ENCODE measurements at regions of chr5 and their contacts with region 1.

Region 1: GRCh38 chr5:141691867-141692532 is 10.0 kb upstream of the ARAP3 start:
- DNase-seq: peak; percentile 69
- H3K4me3 ChIP-seq: peak overlapping the region in 2 of 3 experiments; percentile 35 to 47
- H3K27ac ChIP-seq: no peak overlapping the region
- H3K4me1 ChIP-seq: peaks cover 4% of the 10 kb centered on the region
- H3K27me3 ChIP-seq: no peaks in the 10 kb centered on the region
- CTCF ChIP-seq: peak; percentile 87 to 96

Region 2: DNA sequence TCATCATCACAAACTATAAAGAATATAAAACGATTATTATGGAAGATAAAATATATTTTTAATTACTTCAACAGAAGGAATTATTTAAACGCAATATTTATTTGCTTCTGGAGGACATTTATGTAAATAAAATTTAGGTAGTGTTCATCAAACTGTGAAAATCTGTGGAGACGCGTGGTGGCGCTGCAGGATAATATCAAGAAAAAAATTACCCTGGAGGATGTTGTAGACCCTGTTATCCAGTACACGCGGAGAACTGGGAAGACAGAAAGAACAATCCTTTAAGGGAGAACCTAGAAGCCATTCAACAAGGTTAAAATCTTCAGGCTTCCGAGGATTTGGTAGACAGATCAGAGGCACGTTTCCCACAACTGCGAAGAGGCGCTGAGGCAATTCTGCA is 483.5 kb before region 1 on chr5 and contains the start of gene PCDHB12:
- CTCF ChIA-PET with region 1: no interaction called
- dilution Hi-C with region 1: no loop called
- in situ Hi-C with region 1: no loop called
- intact Hi-C with region 1: no loop called
- DNase-seq: no peak
- H3K4me3 ChIP-seq: no peak within 1 kb of the TSS
- H3K27ac ChIP-seq: no peak within 1 kb of the TSS
- H3K4me1 ChIP-seq: no peaks in the 10 kb centered on the region
- H3K27me3 ChIP-seq: no peaks in the 10 kb centered on the region
- CTCF ChIP-seq: peak; percentile 21 to 38
- total RNA-seq, gene PCDHB12: 0.17 TPM in 1 of 2 donors, not detected in the other

Region 3: GRCh38 chr5:141664732-141665461 is 27.1 kb before region 1 on chr5:
- CTCF ChIA-PET with region 1: no interaction called
- dilution Hi-C with region 1: no loop called
- in situ Hi-C with region 1: no loop called
- intact Hi-C with region 1: loop called (anchors 1 kb)
- DNase-seq: no peak
- H3K4me3 ChIP-seq: no peak overlapping the region
- H3K27ac ChIP-seq: no peak overlapping the region
- H3K4me1 ChIP-seq: no peaks in the 10 kb centered on the region
- H3K27me3 ChIP-seq: no peaks in the 10 kb centered on the region
- CTCF ChIP-seq: peak; percentile 84 to 91

Region 4: GRCh38 chr5:141757402-141757801 is 65.4 kb after region 1 on chr5:
- CTCF ChIA-PET with region 1: no interaction called
- dilution Hi-C with region 1: no loop called
- in situ Hi-C with region 1: no loop called
- intact Hi-C with region 1: no loop called
- DNase-seq: peak; percentile 62
- H3K4me3 ChIP-seq: no peak overlapping the region
- H3K27ac ChIP-seq: no peak overlapping the region
- H3K4me1 ChIP-seq: no peaks in the 10 kb centered on the region
- H3K27me3 ChIP-seq: peaks cover 24% of the 10 kb centered on the region
- CTCF ChIP-seq: peak; percentile 42 to 70

Region 5: DNA sequence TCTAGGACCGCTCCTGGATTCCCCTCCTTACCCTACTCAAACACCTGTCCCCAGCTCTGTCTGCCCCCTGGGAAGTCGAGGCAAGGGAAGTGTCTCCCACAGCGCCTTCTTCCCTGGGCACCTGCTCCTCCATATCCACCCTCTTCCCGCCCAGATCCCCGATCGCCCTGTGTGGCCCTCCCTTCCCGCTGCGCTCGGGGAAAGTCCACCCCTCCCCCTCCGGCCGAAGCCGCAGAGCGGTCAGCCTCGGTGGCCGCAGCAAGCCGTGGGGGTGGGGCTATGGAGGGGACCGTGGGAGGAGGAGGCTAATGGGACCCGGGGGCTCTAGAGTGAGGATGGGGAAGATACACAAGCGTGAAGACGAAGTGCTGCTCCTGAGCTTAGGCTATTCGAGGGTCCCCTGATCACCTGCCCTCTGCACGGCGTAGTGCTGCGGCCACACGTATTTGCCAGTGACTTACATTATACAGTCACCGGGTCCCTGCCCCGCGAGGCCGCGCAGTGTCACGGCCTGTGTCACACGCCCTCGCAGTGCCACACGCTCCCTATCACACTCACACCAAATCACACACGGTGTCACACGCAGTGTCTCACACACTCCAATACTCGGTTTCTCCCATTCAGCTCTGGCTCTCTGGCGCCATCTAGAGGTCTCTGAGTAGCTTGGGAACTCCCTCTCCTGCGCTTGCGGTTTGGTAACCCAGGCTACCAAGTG is 186.9 kb after region 1 on chr5:
- CTCF ChIA-PET with region 1: interaction called, 7 read pairs
- dilution Hi-C with region 1: loop called (anchors 5 kb)
- in situ Hi-C with region 1: loop called in 1 of 2 experiments (anchors 5 kb)
- intact Hi-C with region 1: loop called (anchors 1 kb)
- DNase-seq: peak; percentile 90
- H3K4me3 ChIP-seq: peak overlapping the region; percentile 50 to 58 (median 53)
- H3K27ac ChIP-seq: no peak overlapping the region
- H3K4me1 ChIP-seq: peaks cover 26% of the 10 kb centered on the region
- H3K27me3 ChIP-seq: peaks cover 11% of the 10 kb centered on the region
- CTCF ChIP-seq: peak; percentile 98 to 99

Region 6: DNA sequence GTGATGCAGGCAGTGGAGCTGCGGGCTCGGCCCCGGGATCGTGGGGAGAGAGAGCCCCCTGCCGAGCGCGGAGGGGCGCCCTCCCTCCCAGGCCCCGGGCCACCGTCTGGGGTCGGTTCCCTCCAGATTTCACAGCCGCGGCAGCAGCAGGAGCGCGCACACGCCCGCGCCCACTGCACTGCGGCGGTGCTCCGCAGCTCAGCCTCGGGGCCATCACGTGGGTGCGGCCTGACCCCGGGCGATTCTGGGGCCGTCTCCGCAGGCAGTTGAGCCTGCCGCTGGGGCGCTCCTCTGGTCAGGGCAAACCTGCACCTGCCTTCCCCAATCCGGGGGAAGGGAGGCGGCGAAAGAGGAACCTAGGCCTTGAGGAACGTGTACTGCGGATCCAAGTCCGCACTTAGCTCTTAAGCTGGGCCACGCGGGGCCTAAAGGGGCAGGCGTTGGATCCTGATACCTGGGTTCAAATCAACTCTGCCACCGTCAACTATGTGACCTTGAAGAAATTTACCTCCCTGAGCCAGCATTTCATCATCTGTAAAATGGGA is 222.3 kb after region 1 on chr5:
- CTCF ChIA-PET with region 1: no interaction called
- dilution Hi-C with region 1: no loop called
- in situ Hi-C with region 1: no loop called
- intact Hi-C with region 1: no loop called
- DNase-seq: no peak
- H3K4me3 ChIP-seq: peak overlapping the region in 1 of 3 experiments; percentile 18
- H3K27ac ChIP-seq: no peak overlapping the region
- H3K4me1 ChIP-seq: peaks cover 9% of the 10 kb centered on the region
- H3K27me3 ChIP-seq: no peaks in the 10 kb centered on the region
- CTCF ChIP-seq: peak in 1 of 2 donors; percentile 19

Region 7: DNA sequence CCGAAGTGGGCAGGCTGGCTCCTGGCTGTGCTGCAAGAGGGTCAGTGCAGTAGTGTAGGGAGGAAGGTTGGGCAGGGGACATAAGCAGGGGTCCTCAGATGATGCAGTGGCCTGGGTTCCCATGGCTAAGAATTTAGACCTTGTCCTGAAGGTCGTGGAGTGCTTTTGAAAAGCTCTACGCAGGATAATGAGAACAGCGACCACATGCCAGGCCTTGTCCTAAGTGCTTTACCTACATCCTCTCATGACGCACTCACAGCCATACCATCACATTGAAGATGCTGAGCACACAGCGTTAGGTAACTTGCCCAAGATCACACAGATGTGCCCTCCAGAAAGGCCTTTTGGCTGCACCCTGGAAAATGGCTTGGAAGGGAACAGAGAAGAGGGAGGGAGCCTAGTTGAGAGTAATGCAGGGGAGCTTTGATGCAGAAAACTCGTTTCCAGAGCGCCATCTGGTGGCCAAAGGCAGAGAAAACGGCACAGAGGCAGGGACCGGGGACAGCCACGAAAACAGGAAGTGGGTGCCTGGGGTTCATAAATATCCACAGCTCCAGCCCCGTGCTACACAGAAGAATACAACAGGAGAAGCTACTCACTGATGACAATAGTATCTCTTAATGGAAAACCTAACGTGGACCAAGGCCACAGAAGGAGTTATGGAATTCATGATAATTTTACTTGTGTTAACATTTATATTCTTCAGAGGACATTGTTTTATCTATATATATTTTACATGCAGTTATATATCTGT is 268.6 kb after region 1 on chr5:
- CTCF ChIA-PET with region 1: interaction called, 7 read pairs
- dilution Hi-C with region 1: no loop called
- in situ Hi-C with region 1: loop called (anchors 5 to 10 kb)
- intact Hi-C with region 1: loop called (anchors 1 kb)
- DNase-seq: peak; percentile 73
- H3K4me3 ChIP-seq: no peak overlapping the region
- H3K27ac ChIP-seq: no peak overlapping the region
- H3K4me1 ChIP-seq: peaks cover 3% of the 10 kb centered on the region
- H3K27me3 ChIP-seq: no peaks in the 10 kb centered on the region
- CTCF ChIP-seq: peak; percentile 82 to 83

Region 8: DNA sequence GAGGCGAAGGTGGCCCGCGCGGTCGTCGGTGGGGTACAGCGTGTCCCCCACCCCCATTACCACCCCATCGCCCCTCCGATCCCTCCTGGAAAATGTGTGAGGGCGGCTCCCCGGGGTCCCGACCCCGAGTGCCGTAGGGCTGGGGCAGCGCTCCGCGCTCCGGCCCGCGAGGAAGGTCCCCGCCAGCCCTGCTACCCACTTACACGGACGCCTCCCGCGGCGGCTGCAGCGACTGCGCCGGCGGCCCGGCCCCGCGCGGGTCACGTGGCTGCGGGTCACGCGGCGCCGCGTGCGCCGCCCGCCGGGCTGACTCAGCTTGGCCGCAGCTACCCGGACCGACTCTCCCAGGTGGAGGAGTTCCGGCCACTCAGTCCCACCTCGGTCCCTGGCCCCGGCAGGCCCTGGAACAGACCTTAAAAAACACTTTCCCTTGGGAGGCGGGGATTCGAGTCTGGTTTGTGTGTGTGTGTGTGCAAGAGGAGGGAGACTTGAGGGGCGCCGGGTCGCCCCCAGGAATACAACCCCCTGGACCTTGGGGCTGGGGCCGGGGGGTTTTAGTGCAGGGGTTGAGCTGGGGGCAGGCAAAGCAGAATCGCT is 320.9 kb after region 1 on chr5 and contains the start of gene GNPDA1:
- CTCF ChIA-PET with region 1: no interaction called
- dilution Hi-C with region 1: no loop called
- in situ Hi-C with region 1: no loop called
- intact Hi-C with region 1: loop called (anchors 2 kb)
- DNase-seq: peak; percentile 71
- H3K4me3 ChIP-seq: peak within 1 kb of the TSS; percentile 69 to 84 (median 69)
- H3K27ac ChIP-seq: peak within 1 kb of the TSS; percentile 53
- H3K4me1 ChIP-seq: peaks cover 31% of the 10 kb centered on the region
- H3K27me3 ChIP-seq: no peaks in the 10 kb centered on the region
- CTCF ChIP-seq: no peak
- total RNA-seq, gene GNPDA1: 29.0 to 77.2 TPM

Region 9: DNA sequence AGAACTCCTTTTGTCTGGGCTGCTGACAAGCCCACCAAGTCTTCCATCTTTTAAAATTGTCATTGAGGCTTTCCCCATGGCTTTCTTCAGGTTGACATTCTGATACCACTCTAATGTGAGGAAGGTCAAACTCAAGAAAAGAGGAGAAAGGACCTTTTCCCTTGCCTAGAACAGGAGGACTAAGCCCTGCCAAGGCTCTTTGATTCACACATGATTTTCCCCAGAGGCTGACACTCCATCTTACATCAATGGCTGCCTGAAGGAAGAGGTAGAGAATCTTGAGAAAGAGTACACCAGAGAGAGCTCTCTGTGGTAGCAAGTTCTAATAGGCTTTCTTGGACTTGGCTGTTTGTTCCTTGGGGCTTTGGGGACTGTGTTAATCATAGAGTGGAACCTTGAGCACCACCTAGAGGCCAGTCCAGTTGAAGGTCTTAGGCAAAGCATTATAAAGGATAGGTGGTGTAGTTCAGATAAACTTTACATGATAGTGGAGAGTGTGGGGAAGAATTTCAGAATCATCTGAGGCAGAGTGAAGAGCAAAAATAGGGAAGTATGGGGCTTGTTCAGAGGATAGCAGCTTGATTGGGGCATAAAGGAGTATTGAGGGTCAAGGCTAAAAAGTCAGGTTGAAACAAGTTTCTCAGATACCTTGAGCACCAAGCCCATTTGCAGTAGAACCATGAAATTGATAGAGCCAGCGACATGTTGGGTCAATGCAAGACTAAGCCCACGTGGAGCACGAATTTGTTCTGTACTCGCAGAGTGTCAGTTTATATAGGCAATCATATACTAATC is 453.3 kb after region 1 on chr5:
- CTCF ChIA-PET with region 1: interaction called, 8 read pairs
- dilution Hi-C with region 1: no loop called
- in situ Hi-C with region 1: no loop called
- intact Hi-C with region 1: loop called (anchors 1 kb)
- DNase-seq: peak; percentile 47
- H3K4me3 ChIP-seq: no peak overlapping the region
- H3K27ac ChIP-seq: no peak overlapping the region
- H3K4me1 ChIP-seq: no peaks in the 10 kb centered on the region
- H3K27me3 ChIP-seq: no peaks in the 10 kb centered on the region
- CTCF ChIP-seq: peak; percentile 80 to 88